Right ventricle myocardium superior (tissue), 1 donor: ENCODE measurements at regions of chr3 and their contacts with region 1.

Region 1: GRCh38 chr3:124905849-124906248 is 18.7 kb upstream of the ITGB5 start:
- DNase-seq: no peak
- ATAC-seq: no peak

Region 2: GRCh38 chr3:124761250-124761796 is 144.5 kb before region 1 on chr3:
- intact Hi-C with region 1: loop called (anchors 1 kb)
- DNase-seq: peak; percentile 93
- ATAC-seq: peak; percentile 92

Region 3: DNA sequence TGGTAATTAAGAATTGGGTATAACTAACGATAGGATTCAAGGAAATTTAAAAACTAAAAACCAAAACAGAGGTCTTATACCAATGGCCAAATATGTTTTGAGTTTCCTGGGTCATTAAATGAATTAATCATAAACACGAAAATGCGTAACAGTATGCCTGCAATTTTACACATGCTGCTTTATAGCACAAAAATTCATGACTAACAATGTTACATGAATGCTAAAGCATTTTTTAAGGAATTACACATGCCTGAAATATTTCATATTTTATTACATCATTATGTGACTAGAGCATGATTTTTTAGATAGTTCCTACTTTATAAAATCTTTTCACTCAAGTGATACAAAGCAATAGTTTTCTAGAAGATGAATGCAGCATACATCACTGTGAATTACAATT is 394.6 kb after region 1 on chr3:
- intact Hi-C with region 1: no loop called
- DNase-seq: no peak
- ATAC-seq: no peak